ENCODE measurements at regions of chr2 and their contacts with region 1.

Region 1: DNA sequence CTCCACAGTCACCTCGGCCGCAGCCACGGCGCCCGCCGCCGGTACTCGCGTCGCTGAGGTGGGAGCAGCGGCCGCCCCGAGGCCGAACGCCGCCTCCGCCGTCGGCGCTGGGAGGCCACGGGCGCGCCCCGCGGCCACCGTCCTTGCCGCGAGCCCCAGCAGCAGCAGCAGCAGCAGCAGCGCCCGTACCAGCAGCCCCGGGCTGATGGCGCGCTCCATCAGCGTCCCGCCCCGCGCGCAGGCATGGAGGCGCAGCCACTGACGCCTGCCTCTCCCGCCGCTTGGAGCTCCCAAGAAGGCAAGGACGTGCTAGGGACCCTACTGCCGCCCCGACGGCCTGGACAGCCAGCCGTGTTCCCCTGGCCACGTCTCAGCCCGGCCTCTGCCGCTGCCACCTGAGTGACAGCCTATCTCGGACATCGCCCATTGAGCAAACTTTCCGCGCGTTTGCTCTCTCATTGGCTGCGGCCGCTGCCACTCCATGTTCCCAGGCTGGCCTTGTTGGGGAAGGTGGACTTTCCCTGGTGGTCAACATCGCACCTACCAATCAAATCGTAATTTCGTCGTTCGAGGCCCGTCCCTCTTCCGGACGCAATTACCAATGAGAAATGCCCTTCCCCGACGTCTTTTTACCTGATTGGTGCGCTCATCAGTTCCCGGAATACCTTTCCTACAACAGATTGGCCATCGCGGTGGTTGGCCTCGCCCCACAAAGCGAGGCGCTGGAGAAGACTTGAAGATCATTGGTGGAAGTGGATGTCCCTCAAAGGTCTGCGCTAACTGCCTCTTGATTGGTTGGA is at the start of gene EIF2AK3:
- DNase-seq: peak; percentile 98
- ATAC-seq: peak; percentile 95
- total RNA-seq, gene EIF2AK3: 5.2 TPM

Region 2: GRCh38 chr2:88500695-88501094 is 126.6 kb before region 1 on chr2:
- intact Hi-C with region 1: no loop called
- DNase-seq: no peak
- ATAC-seq: no peak

Region 3: GRCh38 chr2:88691339-88692183 is 64.3 kb after region 1 on chr2 and contains the start of gene RPIA:
- intact Hi-C with region 1: loop called (anchors 2 kb)
- DNase-seq: peak; percentile 99
- ATAC-seq: peak; percentile 99
- total RNA-seq, gene RPIA: 19.1 TPM